MCF 10A (cell line): ENCODE measurements at regions of chr2 and their contacts with region 1.

Region 1: DNA sequence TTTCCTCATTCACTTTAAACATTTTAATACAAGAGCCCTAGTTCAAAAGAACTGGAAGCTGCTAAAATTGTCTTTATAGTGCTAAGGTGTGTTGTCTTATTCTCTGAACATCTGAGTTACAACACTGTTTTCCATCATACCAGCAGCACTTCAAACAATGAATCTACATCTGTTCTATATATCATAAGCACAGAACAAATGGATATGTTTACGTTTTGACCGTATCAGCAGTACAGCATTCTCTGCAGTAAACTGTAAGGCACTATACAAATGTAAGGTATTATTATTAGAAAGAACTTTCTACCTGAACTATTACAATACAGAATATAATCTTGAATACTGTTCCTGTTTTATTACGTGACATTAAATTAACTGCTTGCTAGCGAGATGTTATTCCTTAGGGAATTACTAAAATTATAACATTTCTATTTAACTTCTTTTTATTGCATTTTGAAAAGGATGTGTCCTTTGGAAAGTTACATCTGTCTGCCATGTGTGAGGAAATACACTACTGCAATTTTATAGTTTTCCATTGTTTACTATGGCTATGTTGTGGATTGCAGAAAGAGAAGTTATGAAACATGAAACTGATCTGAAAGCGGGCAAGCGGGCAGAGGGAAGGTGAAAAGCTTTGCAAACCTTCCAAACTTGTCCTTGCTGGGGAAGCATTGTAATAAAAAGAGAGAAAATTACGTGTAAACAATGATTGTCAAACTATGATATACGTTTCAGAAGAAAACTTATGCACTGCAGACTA is 13.7 kb downstream of the NCKAP1 start:
- DNase-seq: peak; percentile 48
- H3K4me3 Mint-ChIP-seq: no peak overlapping the region
- H3K27ac Mint-ChIP-seq: no peak overlapping the region
- H3K4me1 Mint-ChIP-seq: peaks cover 28% of the 10 kb centered on the region
- H3K27me3 Mint-ChIP-seq: no peaks in the 10 kb centered on the region
- CTCF ChIP-seq: no peak

Region 2: GRCh38 chr2:183038341-183039300 is 14.1 kb after region 1 on chr2 and contains the start of gene NCKAP1:
- CTCF ChIA-PET with region 1: interaction called, 3 read pairs
- POLR2A ChIA-PET with region 1: interaction called, 33 read pairs
- intact Hi-C with region 1: no loop called
- DNase-seq: peak; percentile 88
- H3K4me3 Mint-ChIP-seq: peak within 1 kb of the TSS; percentile 96
- H3K27ac Mint-ChIP-seq: peak within 1 kb of the TSS; percentile 57
- H3K4me1 Mint-ChIP-seq: peaks cover 21% of the 10 kb centered on the region
- H3K27me3 Mint-ChIP-seq: no peaks in the 10 kb centered on the region
- CTCF ChIP-seq: peak; percentile 86
- total RNA-seq, gene NCKAP1: 160 and 187 TPM in 2 replicates

Region 3: GRCh38 chr2:183623227-183623626 is 598.7 kb after region 1 on chr2:
- CTCF ChIA-PET with region 1: no interaction called
- POLR2A ChIA-PET with region 1: no interaction called
- intact Hi-C with region 1: no loop called
- DNase-seq: no peak
- H3K4me3 Mint-ChIP-seq: no peak overlapping the region
- H3K27ac Mint-ChIP-seq: no peak overlapping the region
- H3K4me1 Mint-ChIP-seq: no peaks in the 10 kb centered on the region
- H3K27me3 Mint-ChIP-seq: no peaks in the 10 kb centered on the region
- CTCF ChIP-seq: no peak